Heart left ventricle (tissue), 16 donors: ENCODE measurements at regions of chrX and their contacts with region 1.

Region 1: GRCh38 chrX:145190801-145191389 is 56.4 kb upstream of the SPANXN1 start:
- DNase-seq: no peak
- ATAC-seq: no peak
- H3K4me3 ChIP-seq: no peak overlapping the region
- H3K27ac ChIP-seq: no peak overlapping the region
- H3K4me1 ChIP-seq: no peaks in the 10 kb centered on the region
- H3K27me3 ChIP-seq: no peaks in the 10 kb centered on the region
- CTCF ChIP-seq: peak in 9 of 12 donors; percentile 16 to 45 (median 36)
- POLR2A ChIP-seq: no peak

Region 2: DNA sequence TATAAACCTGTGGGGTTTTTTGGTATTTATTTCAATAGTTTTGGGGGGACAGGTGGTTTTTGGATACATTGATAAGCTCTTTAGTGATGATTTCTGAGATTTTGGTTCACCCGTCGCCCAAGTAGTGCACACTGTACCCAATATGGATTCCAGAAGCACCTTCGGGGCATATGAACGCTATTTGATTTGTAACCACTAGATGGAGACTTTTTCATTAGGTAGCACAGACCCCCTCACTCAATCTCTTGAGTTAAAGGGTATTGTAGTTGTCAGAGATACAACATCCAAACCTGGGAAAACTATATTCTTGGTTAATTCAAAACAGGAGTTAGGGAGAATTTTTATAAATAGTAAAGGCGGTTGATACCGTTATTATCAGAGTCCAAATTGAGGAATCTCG is 1753.5 kb before region 1 on chrX:
- intact Hi-C with region 1: loop called in 1 of 10 experiments (anchors 5 kb)
- DNase-seq: no peak
- ATAC-seq: peak in 1 of 4 donors; percentile 59
- H3K4me3 ChIP-seq: no peak overlapping the region
- H3K27ac ChIP-seq: no peak overlapping the region
- H3K4me1 ChIP-seq: no peaks in the 10 kb centered on the region
- H3K27me3 ChIP-seq: no peaks in the 10 kb centered on the region
- CTCF ChIP-seq: peak in 9 of 12 donors; percentile 18 to 50 (median 29)
- POLR2A ChIP-seq: no peak

Region 3: GRCh38 chrX:143664302-143664701 is 1526.6 kb before region 1 on chrX:
- intact Hi-C with region 1: loop called in 1 of 10 experiments (anchors 5 kb)
- DNase-seq: no peak
- ATAC-seq: no peak
- H3K4me3 ChIP-seq: no peak overlapping the region
- H3K27ac ChIP-seq: no peak overlapping the region
- H3K4me1 ChIP-seq: no peaks in the 10 kb centered on the region
- H3K27me3 ChIP-seq: peaks cover 0 to 3% (median 0%) of the 10 kb centered on the region in 9 donors
- CTCF ChIP-seq: peak in 11 of 12 donors; percentile 15 to 60 (median 44)
- POLR2A ChIP-seq: no peak